Calu3 (cell line): ENCODE measurements at regions of chr1 and their contacts with region 1.

Region 1: DNA sequence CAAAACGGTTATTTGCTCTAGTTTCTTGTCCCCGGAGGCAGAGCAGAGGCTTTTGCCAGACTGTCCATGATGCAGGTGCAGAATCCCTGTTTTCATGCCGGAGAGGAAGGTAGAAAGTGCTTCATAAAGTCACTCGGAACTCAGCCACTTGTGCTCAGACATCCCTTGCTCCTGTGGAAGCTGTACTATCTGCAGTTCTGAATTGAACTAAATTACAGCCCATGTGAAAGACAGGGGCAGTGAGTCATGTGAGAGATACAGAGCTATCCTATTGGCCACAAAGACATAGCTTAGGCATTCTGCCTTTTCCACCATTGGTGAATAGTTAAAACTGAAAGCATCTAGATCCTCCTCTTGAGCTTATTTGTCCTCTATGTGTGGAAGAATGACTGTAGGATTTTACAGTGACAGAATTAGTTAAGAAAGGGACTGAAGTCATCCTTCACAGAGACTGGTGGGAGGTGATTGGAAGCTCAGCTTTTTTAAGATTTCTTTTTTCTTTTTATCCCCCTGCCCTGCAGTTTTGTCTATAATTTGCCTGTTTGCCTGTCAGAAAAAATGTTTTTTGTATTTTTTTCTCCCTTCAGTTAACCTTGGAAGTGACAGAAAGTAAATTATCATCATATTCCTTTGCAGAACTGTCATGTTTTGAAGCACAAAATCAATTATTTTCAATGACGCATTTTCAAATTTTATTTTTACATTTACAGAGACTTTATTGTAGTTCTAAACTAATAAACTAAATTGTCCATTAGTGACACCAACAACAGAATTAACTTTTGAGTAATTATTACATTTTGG is 298.6 kb downstream of the PTPRC start:
- DNase-seq: peak; percentile 66
- H3K4me3 Mint-ChIP-seq: no peak overlapping the region
- H3K27ac Mint-ChIP-seq: no peak overlapping the region
- H3K4me1 Mint-ChIP-seq: no peaks in the 10 kb centered on the region
- H3K27me3 Mint-ChIP-seq: no peaks in the 10 kb centered on the region
- CTCF ChIP-seq: no peak

Region 2: DNA sequence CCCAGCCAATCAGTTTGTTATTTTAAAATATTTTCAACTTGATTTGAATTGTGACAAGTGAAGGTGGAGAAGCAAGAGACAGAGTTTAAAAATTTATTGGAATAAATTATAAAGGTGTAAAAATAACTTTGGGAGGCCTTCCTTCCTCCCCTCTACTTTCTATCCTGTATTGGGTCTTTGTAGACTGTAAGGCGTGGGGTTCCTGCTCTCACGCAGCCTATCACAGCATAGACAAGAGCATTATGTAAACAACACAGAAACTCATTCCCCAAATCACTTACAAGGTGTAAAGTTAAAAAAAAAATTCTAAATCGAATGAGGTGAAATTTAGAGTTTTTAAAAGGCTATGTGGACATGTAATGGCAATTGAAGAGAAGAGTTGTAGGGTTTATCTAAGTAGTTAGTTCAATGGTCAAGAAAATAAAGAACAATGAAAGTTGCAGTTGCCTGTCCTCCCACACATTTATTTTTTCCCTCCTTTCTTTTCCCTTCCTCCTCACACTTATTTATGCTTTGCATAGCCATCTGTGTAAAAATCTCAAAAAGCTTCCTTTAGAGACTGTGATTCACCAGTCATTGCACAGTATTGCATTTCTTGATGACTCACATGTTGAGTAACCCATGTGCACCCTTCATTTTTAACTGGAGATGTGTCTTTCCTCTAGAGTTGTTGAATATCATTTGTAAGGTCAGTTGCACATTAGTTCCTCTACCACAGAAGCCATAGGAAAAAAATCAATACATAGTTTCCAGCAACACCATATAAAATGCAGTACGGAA is 56.4 kb before region 1 on chr1:
- CTCF ChIA-PET with region 1: no interaction called
- intact Hi-C with region 1: loop called (anchors 2 kb)
- DNase-seq: peak; percentile 57
- H3K4me3 Mint-ChIP-seq: peak overlapping the region; percentile 36
- H3K27ac Mint-ChIP-seq: peak overlapping the region; percentile 99
- H3K4me1 Mint-ChIP-seq: peaks cover 44% of the 10 kb centered on the region
- H3K27me3 Mint-ChIP-seq: no peaks in the 10 kb centered on the region
- CTCF ChIP-seq: no peak

Region 3: GRCh38 chr1:199243423-199244061 is 306.1 kb after region 1 on chr1:
- CTCF ChIA-PET with region 1: no interaction called
- intact Hi-C with region 1: loop called (anchors 10 kb)
- DNase-seq: peak; percentile 83
- H3K4me3 Mint-ChIP-seq: no peak overlapping the region
- H3K27ac Mint-ChIP-seq: no peak overlapping the region
- H3K4me1 Mint-ChIP-seq: peaks cover 38% of the 10 kb centered on the region
- H3K27me3 Mint-ChIP-seq: no peaks in the 10 kb centered on the region
- CTCF ChIP-seq: peak; percentile 69

Region 4: DNA sequence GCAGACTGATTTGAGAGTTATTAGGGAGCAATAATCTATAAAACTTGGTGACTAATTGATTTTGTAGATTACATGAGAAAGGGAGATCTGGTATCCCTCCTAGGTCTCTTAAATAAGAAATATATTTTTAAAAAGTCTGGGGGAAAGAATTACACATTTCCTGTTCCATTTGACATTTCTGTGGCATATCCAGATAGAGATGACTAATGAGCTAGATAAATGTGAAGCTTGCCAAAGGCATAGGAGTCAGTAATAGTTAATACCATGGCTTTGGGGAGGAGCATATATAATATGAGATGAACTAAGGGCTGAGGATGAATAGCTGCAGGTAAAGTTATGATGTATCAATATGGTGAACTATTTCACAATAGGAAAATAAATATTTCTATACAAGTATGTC is 365.1 kb after region 1 on chr1:
- CTCF ChIA-PET with region 1: no interaction called
- intact Hi-C with region 1: no loop called
- DNase-seq: no peak
- H3K4me3 Mint-ChIP-seq: no peak overlapping the region
- H3K27ac Mint-ChIP-seq: no peak overlapping the region
- H3K4me1 Mint-ChIP-seq: peaks cover 21% of the 10 kb centered on the region
- H3K27me3 Mint-ChIP-seq: no peaks in the 10 kb centered on the region
- CTCF ChIP-seq: no peak